CD14-positive monocyte (primary cell): ENCODE measurements at regions of chr16 and their contacts with region 1.

Region 1: DNA sequence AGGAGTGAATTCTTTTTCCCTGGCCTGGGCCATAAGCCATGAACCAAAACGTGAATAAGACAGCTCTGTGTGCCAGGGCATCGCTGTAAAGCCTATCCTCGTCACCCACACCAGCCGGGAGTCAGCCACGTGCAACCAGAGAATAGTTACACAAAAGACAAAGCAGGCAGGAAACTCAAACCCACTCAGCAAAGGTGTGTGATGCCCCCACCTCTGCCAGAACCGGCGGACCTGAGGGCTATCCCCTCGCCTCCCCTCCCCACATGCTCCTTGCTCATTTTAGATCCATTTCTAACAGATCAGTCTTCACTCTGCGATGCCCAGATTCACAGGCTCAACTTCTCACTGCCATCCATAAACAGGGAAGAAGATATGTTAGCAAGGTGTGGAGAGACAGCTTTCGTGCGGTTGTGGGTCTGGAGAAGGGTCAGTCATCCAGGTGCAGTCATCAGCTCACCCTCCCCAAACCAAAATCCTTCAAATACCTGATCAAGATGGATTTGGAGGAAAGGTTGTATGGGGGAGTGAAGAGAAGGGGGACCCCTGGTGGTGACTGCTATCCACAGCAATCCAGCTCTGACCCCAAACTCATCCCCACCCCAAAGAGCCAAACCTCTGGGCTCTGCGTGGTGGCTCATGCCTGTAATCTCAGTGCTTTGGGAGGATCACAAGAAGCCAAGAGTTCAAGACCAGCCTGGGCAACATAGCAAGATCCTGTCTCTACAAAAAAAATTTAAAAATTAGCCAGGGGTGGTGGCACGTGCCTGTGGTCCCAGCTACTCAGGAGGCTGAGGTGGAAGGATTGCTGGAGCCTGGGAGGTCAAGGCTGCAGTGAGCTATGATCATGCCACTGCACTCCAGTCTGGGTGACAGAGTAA is 219.2 kb downstream of the C16orf78 start:
- DNase-seq: peak in 2 of 3 donors; percentile 14 to 31
- H3K4me3 ChIP-seq: no peak overlapping the region
- H3K4me3 Mint-ChIP-seq: no peak overlapping the region
- H3K27ac ChIP-seq: no peak overlapping the region
- H3K27ac Mint-ChIP-seq: peak overlapping the region in 1 of 7 donors; percentile 20
- H3K4me1 ChIP-seq: peaks cover 0 to 6% of the 10 kb centered on the region in 2 donors
- H3K4me1 Mint-ChIP-seq: peaks cover 14% of the 10 kb centered on the region
- H3K27me3 ChIP-seq: no peaks in the 10 kb centered on the region
- H3K27me3 Mint-ChIP-seq: peaks cover 0 to 4% (median 2%) of the 10 kb centered on the region in 3 donors
- CTCF ChIP-seq: peak; percentile 79

Region 2: GRCh38 chr16:49407873-49408550 is 184.8 kb before region 1 on chr16:
- intact Hi-C with region 1: loop called (anchors 5 kb)
- DNase-seq: peak; percentile 2 to 39 (median 13)
- H3K4me3 ChIP-seq: no peak overlapping the region
- H3K4me3 Mint-ChIP-seq: peak overlapping the region in 1 of 2 donors; percentile 28
- H3K27ac ChIP-seq: no peak overlapping the region
- H3K27ac Mint-ChIP-seq: peak overlapping the region in 1 of 7 donors; percentile 31
- H3K4me1 ChIP-seq: no peaks in the 10 kb centered on the region
- H3K4me1 Mint-ChIP-seq: peaks cover 3% of the 10 kb centered on the region
- H3K27me3 ChIP-seq: no peaks in the 10 kb centered on the region
- H3K27me3 Mint-ChIP-seq: peaks cover 2 to 6% (median 4%) of the 10 kb centered on the region in 3 donors
- CTCF ChIP-seq: peak; percentile 74

Region 3: GRCh38 chr16:49491771-49492761 is 100.7 kb before region 1 on chr16:
- intact Hi-C with region 1: loop called (anchors 5 to 10 kb)
- DNase-seq: peak in 2 of 3 donors; percentile 9 to 15
- H3K4me3 ChIP-seq: no peak overlapping the region
- H3K4me3 Mint-ChIP-seq: peak overlapping the region in 1 of 2 donors; percentile 55
- H3K27ac ChIP-seq: no peak overlapping the region
- H3K27ac Mint-ChIP-seq: no peak overlapping the region
- H3K4me1 ChIP-seq: peaks cover 0 to 7% of the 10 kb centered on the region in 2 donors
- H3K4me1 Mint-ChIP-seq: peaks cover 2% of the 10 kb centered on the region
- H3K27me3 ChIP-seq: no peaks in the 10 kb centered on the region
- H3K27me3 Mint-ChIP-seq: peaks cover 0 to 12% (median 2%) of the 10 kb centered on the region in 3 donors
- CTCF ChIP-seq: peak; percentile 99

Region 4: DNA sequence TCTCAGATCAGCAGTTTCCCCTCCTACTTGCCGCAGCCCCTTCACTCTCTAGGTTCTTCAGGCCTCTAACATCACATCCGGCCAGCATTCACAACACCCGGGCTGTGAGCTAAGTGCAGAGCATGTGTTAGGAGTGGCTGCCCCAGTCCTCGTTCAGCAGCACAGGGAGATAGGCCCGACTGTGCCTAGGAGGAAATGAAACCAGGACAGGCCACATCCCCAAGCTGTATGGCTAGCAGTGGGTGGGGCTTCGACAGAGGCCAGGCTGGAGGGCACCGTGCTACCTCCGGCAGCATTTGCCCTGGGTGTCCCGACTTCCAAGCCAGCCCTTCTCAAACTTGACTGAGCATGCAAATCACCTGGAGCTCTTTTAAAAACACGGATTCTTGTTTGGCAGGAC is 17.4 kb before region 1 on chr16:
- intact Hi-C with region 1: no loop called
- DNase-seq: peak; percentile 66 to 79 (median 77)
- H3K4me3 ChIP-seq: peak overlapping the region in 1 of 3 experiments; percentile 40
- H3K4me3 Mint-ChIP-seq: peak overlapping the region; percentile 37 to 40
- H3K27ac ChIP-seq: peak overlapping the region; percentile 13 to 17
- H3K27ac Mint-ChIP-seq: peak overlapping the region; percentile 7 to 89 (median 62)
- H3K4me1 ChIP-seq: peaks cover 16 to 17% of the 10 kb centered on the region in 2 donors
- H3K4me1 Mint-ChIP-seq: peaks cover 17% of the 10 kb centered on the region
- H3K27me3 ChIP-seq: no peaks in the 10 kb centered on the region
- H3K27me3 Mint-ChIP-seq: peaks cover 0 to 1% (median 0%) of the 10 kb centered on the region in 3 donors
- CTCF ChIP-seq: no peak

Region 5: GRCh38 chr16:49755313-49755620 is 162.5 kb after region 1 on chr16:
- intact Hi-C with region 1: no loop called
- DNase-seq: peak; percentile 4 to 10 (median 10)
- H3K4me3 ChIP-seq: peak overlapping the region; percentile 49 to 78 (median 54)
- H3K4me3 Mint-ChIP-seq: peak overlapping the region; percentile 75 to 85
- H3K27ac ChIP-seq: peak overlapping the region; percentile 56 to 75
- H3K27ac Mint-ChIP-seq: peak overlapping the region in 4 of 7 donors; percentile 14 to 54 (median 30)
- H3K4me1 ChIP-seq: peaks cover 21 to 23% of the 10 kb centered on the region in 2 donors
- H3K4me1 Mint-ChIP-seq: peaks cover 25% of the 10 kb centered on the region
- H3K27me3 ChIP-seq: no peaks in the 10 kb centered on the region
- H3K27me3 Mint-ChIP-seq: peaks cover 2 to 7% (median 2%) of the 10 kb centered on the region in 3 donors
- CTCF ChIP-seq: no peak